Activated CD8-positive, alpha-beta memory T cell treated with anti-CD3 and anti-CD28 coated beads, Interleukin-2, amount 10 ng/mL, durations not matched to agents 7 days and 5 days (primary cell): ENCODE measurements at regions of chr15 and their contacts with region 1.

Region 1: DNA sequence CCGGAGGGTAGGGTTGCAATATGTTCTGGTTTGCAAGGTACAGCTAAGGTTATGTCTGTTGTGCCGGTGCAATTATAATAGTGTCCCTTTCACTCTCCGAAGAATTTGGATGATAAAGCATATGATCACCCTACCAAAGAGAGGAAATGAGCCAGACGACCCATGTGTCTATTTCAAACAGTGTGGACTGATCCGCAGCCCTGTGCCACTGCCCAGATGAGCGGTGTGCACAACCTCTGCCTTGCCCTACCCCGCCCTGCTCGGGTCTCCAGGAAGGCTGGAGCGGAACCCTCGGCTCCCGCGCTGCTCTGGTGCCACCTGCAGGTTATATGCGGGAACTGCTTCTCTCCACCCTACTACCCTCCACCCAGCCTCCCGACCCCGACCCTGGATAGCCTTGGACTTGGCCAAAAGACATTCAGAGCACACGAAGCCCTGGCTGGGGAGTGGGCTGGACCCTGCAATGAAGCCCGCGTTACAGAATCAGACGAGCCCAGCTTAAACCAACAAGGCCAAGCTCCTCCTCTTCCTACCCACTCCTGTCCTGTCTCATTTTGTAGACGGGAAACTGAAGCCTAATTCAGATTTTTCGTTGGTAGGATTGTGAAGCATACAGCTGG is 68.4 kb upstream of the CHRNB4 start:
- DNase-seq: peak; percentile 75
- ATAC-seq: peak; percentile 96
- H3K4me3 Mint-ChIP-seq: peak overlapping the region; percentile 41
- H3K27ac Mint-ChIP-seq: no peak overlapping the region
- H3K4me1 Mint-ChIP-seq: peaks cover 15% of the 10 kb centered on the region
- H3K27me3 Mint-ChIP-seq: peaks cover 34% of the 10 kb centered on the region

Region 2: GRCh38 chr15:78567531-78567930 is 141.8 kb before region 1 on chr15:
- CTCF ChIA-PET with region 1: interaction called, 10 read pairs
- DNase-seq: no peak
- ATAC-seq: no peak
- H3K4me3 Mint-ChIP-seq: no peak overlapping the region
- H3K27ac Mint-ChIP-seq: no peak overlapping the region
- H3K4me1 Mint-ChIP-seq: peaks cover 26% of the 10 kb centered on the region
- H3K27me3 Mint-ChIP-seq: peaks cover 19% of the 10 kb centered on the region

Region 3: DNA sequence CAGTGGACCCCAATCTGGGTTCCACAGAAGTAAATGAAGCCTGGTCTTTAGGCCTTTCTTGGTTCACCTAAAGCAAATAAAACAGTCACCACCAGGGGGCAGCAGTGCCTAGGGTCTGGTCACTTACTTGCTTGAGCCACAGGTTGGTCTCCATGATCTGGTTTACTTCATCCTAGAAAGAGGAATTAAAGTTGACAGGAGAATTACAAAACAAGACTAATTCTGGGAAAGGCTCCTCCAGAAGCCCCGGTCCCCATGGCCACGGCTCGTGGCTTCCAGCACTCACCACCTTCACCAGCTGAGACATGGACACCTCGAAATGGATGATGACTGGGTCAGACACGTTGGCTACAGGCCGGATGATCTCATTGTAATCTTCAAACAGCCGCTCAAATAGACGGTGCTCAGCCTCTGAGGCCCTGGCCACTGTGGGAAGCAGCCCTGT is 90.9 kb before region 1 on chr15:
- CTCF ChIA-PET with region 1: interaction called, 26 read pairs
- DNase-seq: peak; percentile 86
- ATAC-seq: peak; percentile 64
- H3K4me3 Mint-ChIP-seq: no peak overlapping the region
- H3K27ac Mint-ChIP-seq: no peak overlapping the region
- H3K4me1 Mint-ChIP-seq: peaks cover 4% of the 10 kb centered on the region
- H3K27me3 Mint-ChIP-seq: peaks cover 56% of the 10 kb centered on the region

Region 4: DNA sequence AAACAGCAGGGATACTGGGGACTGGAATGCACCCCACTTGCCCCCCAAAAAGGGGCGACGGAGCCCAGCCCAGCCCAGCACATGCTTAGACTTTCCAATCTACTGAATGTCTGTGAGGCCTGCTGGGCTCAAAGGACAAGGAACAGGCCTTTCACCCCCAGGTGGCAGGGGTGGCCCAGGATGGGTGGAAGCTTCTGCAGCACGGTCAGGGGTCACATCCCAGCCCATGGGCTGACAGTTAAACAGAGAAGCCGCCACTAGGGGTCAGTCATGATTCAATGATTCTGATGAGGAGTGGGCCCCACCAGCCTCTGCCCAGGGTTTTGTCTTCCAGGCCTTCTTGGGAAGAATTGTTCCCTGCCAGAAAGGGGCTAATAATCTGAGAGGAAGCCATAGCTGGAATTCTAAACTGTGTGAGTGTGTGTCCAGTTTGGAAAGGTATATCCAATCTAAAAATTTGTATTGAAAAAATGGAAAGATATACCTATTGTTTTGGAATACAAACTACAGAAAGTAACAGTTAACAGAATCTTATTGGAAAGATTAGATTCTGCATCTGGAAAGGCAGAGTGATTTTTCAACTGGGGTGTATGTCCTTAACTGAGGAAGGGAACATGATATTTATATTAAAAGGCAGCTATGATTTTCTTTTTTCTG is 70.6 kb before region 1 on chr15:
- CTCF ChIA-PET with region 1: interaction called, 12 read pairs
- DNase-seq: peak; percentile 51
- ATAC-seq: no peak
- H3K4me3 Mint-ChIP-seq: no peak overlapping the region
- H3K27ac Mint-ChIP-seq: no peak overlapping the region
- H3K4me1 Mint-ChIP-seq: peaks cover 5% of the 10 kb centered on the region
- H3K27me3 Mint-ChIP-seq: peaks cover 21% of the 10 kb centered on the region

Region 5: GRCh38 chr15:78734451-78735064 is 25.2 kb after region 1 on chr15:
- CTCF ChIA-PET with region 1: no interaction called
- DNase-seq: no peak
- ATAC-seq: no peak
- H3K4me3 Mint-ChIP-seq: no peak overlapping the region
- H3K27ac Mint-ChIP-seq: no peak overlapping the region
- H3K4me1 Mint-ChIP-seq: peaks cover 2% of the 10 kb centered on the region
- H3K27me3 Mint-ChIP-seq: peaks cover 19% of the 10 kb centered on the region

Region 6: DNA sequence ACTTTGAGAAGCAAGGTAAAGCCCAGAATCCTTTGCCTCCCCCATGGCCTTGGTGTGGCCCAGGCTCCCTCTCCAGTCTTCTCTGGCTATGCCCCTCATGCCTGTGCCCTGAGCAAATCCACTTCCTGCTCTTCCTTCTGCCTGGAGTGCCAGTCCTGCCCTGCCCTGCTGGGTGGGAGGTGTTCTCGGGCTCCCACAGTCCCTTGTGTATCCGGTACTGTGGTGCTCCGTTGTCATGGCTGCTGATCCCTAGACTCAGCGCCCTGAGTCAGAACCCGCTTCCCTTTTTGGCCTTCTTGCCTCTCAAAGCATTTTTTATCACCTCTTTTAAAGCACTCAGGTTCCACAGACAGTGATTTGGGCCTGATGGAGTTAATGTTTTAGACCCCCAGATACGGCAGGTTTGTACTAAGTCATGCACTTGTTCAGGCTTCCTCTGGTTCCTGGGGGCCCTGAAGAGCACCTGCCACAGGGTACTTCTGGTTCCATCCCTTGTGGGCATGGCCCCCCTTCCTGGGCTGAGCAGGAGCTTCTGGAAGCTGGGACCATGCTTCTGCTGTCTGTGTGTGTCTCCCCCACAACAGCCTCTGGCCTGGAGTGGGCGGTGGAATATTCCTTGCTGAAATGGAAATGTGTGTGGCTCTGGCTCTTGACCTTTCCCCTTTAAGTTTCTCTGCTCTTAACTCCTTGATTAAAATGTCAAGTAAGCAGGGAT is 131.4 kb after region 1 on chr15:
- CTCF ChIA-PET with region 1: no interaction called
- DNase-seq: no peak
- ATAC-seq: no peak
- H3K4me3 Mint-ChIP-seq: no peak overlapping the region
- H3K27ac Mint-ChIP-seq: no peak overlapping the region
- H3K4me1 Mint-ChIP-seq: no peaks in the 10 kb centered on the region
- H3K27me3 Mint-ChIP-seq: peaks cover 4% of the 10 kb centered on the region